Endothelial cell of umbilical vein (primary cell): ENCODE measurements at regions of chr2 and their contacts with region 1.

Region 1: GRCh38 chr2:113965644-113966043 is 75.8 kb downstream of the ACTR3 start:
- DNase-seq: peak; percentile 66
- H3K4me3 ChIP-seq: no peak overlapping the region
- H3K27ac ChIP-seq: peak overlapping the region; percentile 49
- H3K4me1 ChIP-seq: peaks cover 15% of the 10 kb centered on the region
- H3K27me3 ChIP-seq: no peaks in the 10 kb centered on the region
- CTCF ChIP-seq: peak; percentile 51 to 56
- POLR2A ChIP-seq: peak; percentile 21

Region 2: GRCh38 chr2:113977660-113978523 is 12.2 kb after region 1 on chr2:
- CTCF ChIA-PET with region 1: interaction called, 11 read pairs
- POLR2A ChIA-PET with region 1: no interaction called
- dilution Hi-C with region 1: no loop called
- intact Hi-C with region 1: no loop called
- DNase-seq: peak; percentile 82
- H3K4me3 ChIP-seq: no peak overlapping the region
- H3K27ac ChIP-seq: peak overlapping the region; percentile 27
- H3K4me1 ChIP-seq: peaks cover 14% of the 10 kb centered on the region
- H3K27me3 ChIP-seq: no peaks in the 10 kb centered on the region
- CTCF ChIP-seq: peak in 1 of 2 donors; percentile 9
- POLR2A ChIP-seq: no peak